Activated T-helper 2 cell treated with anti-CD3 and anti-CD28 coated beads, Interferon-gamma antibody, Interleukin-2, Interleukin-4, amounts not matched to agents 10 μg/mL and 5 μg/mL and 100 μg/mL, durations not matched to agents 14 hours and 24 hours and 36 hours (primary cell): ENCODE measurements at regions of chr14 and their contacts with region 1.

Region 1: DNA sequence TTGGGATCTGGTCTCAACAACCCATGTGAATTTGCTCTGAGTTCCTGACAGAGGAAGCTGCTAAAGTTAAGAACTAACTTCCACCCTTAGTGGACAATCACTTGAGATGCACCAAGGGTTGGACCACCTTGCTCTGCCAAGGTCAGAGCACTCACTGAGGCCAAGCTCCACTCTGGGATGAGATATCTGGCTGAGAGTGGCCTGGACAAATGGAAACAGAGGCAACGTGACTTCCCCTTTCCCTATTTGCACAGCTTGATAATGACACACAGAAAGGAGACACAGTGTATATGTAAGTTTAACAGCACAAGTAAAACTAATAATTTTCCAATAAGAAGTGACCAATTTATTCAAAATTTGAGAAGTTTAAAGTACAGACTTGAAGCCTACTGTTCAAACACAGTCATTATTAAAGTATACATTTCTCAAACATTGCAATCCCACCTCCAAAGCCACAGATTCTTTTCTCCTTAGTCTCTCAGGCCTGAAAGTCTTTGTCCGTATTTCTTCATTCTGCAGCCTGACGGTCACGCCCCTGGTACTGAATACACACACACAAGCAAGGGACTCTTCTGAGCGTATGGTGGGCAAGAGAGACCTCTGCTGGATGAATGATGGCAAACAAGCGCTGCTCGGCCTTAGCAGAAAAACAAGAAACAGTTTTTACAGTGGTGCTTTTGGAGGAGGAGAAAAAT is 28.6 kb downstream of the TMEM30B start:
- DNase-seq: peak; percentile 50
- H3K4me3 Mint-ChIP-seq: no peak overlapping the region
- H3K27ac Mint-ChIP-seq: no peak overlapping the region
- H3K4me1 Mint-ChIP-seq: peaks cover 16% of the 10 kb centered on the region
- H3K27me3 Mint-ChIP-seq: peaks cover 24% of the 10 kb centered on the region

Region 2: DNA sequence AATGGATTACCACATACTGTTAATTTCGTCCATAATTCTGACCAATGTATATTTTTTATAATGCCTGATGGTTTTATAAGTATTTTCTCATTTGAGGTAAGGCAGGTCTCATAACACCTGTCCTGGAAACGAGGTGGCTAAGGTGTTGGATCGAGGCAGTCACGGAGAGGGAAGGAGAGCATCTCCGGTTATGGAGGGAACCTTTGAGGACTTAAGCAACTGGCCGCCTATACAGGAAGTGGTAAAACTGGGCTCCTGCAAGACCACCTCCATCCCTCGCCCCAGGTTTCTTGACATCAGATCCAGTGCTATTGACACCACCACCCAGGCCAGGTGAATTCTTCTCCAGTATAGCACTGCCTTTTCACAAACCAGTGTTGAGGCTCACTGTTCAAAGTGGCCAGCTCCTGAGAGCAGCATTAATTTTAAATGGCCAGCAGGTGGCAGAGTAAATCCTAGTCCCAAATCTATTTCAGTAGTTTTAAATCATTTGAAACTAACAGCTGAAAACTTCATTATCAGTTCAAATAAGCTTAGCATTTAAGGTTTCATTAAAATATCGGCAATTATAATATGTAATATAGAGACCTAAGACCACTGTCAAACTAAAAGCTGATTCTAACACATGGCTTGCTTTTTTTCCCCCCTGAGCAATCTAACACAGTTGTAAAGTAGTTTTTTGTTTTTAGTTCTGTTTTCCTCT is 902.7 kb before region 1 on chr14:
- intact Hi-C with region 1: loop called (anchors 5 kb)
- DNase-seq: no peak
- H3K4me3 Mint-ChIP-seq: no peak overlapping the region
- H3K27ac Mint-ChIP-seq: no peak overlapping the region
- H3K4me1 Mint-ChIP-seq: no peaks in the 10 kb centered on the region
- H3K27me3 Mint-ChIP-seq: peaks cover 23% of the 10 kb centered on the region

Region 3: GRCh38 chr14:60622917-60623257 is 629.6 kb before region 1 on chr14:
- intact Hi-C with region 1: loop called (anchors 1 kb)
- DNase-seq: no peak
- H3K4me3 Mint-ChIP-seq: no peak overlapping the region
- H3K27ac Mint-ChIP-seq: no peak overlapping the region
- H3K4me1 Mint-ChIP-seq: peaks cover 6% of the 10 kb centered on the region
- H3K27me3 Mint-ChIP-seq: peaks cover 34% of the 10 kb centered on the region

Region 4: DNA sequence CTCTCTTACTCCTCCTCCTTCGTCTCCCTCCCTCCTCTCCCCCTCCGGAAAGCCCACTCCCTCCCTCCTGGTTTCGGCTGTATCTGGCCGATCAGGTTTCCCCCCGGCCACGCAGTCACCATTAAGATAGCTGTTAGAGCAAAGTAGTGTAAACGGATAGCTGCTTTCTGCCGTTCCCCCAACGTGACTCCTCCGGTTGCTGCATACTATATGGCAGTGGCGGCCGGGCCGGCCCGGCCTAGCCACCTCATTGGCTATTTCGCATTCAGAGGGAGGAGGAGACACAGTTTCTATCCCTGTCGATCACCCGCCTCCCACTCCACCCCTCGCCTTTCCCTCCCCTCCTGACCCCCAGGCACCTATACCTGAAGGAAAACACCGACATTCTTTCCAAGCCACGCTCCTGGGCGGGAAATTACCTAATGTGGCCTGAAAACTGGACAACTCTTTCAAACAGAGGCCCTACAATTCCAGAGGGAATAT is 528.3 kb before region 1 on chr14 and contains the start of gene SIX4:
- intact Hi-C with region 1: loop called (anchors 10 kb)
- DNase-seq: no peak
- H3K4me3 Mint-ChIP-seq: peak within 1 kb of the TSS; percentile 83
- H3K27ac Mint-ChIP-seq: peak within 1 kb of the TSS; percentile 20
- H3K4me1 Mint-ChIP-seq: peaks cover 15% of the 10 kb centered on the region
- H3K27me3 Mint-ChIP-seq: peaks cover 72% of the 10 kb centered on the region
- total RNA-seq, gene SIX4: 1.1 and 1.3 TPM in 2 replicates

Region 5: DNA sequence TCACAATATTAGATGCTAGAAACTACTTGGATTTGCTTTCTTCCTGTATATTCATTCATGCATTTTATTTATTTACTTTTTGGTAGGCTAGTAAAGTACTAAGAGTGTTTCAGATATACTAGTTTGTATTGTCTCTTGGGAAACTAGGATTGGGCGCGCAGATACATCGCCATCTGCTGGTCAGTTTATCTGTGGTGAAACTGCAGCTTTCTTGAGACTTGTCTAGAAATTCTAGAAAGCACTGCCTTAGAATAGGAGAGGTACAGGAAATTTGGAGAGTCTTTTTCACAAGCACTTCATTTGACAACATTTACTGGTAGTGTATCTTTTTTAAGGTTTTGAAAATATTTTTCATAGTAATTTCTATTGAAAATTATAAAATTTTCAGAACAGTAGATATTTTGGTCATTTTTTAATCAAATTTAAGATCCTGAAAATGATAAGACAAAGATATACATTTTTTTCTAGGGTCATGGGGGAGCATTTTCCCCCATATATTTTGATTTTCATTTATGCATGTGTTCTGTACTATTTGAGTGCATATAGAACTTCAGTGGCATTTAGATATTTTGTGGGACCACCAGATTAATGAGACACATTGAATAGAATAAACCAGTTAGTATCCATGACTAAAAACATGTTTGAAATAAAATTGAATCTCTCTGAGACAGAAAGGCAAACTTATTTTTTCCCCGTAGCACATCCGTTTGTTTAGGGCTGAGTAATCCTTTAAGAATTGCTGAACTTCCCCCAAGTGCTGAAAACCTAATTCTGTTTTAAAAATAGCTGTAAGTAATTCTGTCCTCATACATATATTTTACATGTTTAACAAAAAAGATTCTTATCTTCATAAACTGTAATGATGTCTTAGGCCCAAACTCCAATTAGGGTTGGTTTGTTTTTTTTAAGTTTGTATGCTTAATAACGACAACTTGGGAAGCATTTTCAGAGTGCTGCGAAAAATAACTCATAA is 227.0 kb before region 1 on chr14:
- intact Hi-C with region 1: loop called (anchors 1 kb)
- DNase-seq: peak; percentile 31
- H3K4me3 Mint-ChIP-seq: no peak overlapping the region
- H3K27ac Mint-ChIP-seq: no peak overlapping the region
- H3K4me1 Mint-ChIP-seq: peaks cover 5% of the 10 kb centered on the region
- H3K27me3 Mint-ChIP-seq: no peaks in the 10 kb centered on the region

Region 6: DNA sequence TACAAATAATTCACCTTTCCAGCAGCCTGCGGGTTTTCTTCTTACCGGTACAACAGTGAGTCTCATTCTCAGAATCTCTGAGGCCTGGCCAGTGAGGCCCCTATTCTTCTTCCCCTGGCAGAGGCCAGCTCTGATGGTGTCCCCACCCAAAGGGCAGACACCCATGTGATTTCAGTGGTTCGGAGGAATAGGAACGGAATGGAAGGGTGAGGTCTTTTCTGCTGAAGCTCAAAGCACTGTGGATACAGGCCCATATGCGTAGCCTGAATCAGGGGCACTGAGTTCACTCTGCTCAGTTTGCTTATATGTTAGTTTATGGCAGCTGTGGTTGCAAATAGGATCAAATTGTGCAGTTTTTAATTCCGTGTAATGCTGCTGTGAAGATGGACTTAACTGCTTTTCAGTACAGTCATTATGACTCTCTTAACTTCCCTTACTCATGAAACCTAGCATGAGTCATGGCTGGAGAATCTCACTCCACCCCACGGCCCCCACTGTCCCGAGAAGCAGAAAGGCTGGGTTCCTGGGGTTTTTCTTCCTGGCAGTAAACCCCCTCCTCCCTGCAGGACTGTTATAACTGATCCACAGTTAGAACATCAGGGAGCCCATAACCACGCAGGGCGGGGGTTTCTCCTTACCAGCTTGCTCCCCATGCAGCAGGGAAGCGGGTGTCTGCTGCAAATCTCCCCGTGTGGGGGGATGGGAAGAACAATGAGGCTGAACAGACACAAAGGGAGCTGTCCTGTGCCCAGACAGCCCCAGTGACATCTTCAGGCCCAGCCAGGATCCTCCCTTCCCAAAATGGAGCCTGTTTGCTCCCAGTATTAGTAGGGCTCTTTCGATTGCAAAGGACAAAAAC is 148.8 kb before region 1 on chr14:
- intact Hi-C with region 1: loop called (anchors 2 kb)
- DNase-seq: peak; percentile 17
- H3K4me3 Mint-ChIP-seq: peak overlapping the region; percentile 26
- H3K27ac Mint-ChIP-seq: peak overlapping the region; percentile 85
- H3K4me1 Mint-ChIP-seq: peaks cover 32% of the 10 kb centered on the region
- H3K27me3 Mint-ChIP-seq: no peaks in the 10 kb centered on the region

Region 7: GRCh38 chr14:61321385-61322010 is 69.0 kb after region 1 on chr14 and contains the start of gene PRKCH:
- intact Hi-C with region 1: no loop called
- DNase-seq: peak; percentile 81
- H3K4me3 Mint-ChIP-seq: peak within 1 kb of the TSS; percentile 98
- H3K27ac Mint-ChIP-seq: peak within 1 kb of the TSS; percentile 94
- H3K4me1 Mint-ChIP-seq: peaks cover 29% of the 10 kb centered on the region
- H3K27me3 Mint-ChIP-seq: no peaks in the 10 kb centered on the region
- total RNA-seq, gene PRKCH: 101 and 102 TPM in 2 replicates